ENCODE measurements at regions of chr18 and their contacts with region 1.

Region 1: GRCh38 chr18:48868468-48869466 is 82.0 kb downstream of the SMAD7 start:
- DNase-seq: peak; percentile 96
- ATAC-seq: peak; percentile 92
- H3K4me3 ChIP-seq: 0 out of 2 replicates have a peak overlapping the region, but pooled peaks have one; percentile 20
- H3K27ac ChIP-seq: peak overlapping the region; percentile 97
- H3K4me1 ChIP-seq: peaks cover 29% of the 10 kb centered on the region
- H3K27me3 ChIP-seq: no peaks in the 10 kb centered on the region
- CTCF ChIP-seq: no peak
- EP300 ChIP-seq: peak; percentile 84 to 93
- POLR2A ChIP-seq: peak; percentile 73
- RAD21 ChIP-seq: peak; percentile 28; the same call in 1 of the 2 replicates

Region 2: DNA sequence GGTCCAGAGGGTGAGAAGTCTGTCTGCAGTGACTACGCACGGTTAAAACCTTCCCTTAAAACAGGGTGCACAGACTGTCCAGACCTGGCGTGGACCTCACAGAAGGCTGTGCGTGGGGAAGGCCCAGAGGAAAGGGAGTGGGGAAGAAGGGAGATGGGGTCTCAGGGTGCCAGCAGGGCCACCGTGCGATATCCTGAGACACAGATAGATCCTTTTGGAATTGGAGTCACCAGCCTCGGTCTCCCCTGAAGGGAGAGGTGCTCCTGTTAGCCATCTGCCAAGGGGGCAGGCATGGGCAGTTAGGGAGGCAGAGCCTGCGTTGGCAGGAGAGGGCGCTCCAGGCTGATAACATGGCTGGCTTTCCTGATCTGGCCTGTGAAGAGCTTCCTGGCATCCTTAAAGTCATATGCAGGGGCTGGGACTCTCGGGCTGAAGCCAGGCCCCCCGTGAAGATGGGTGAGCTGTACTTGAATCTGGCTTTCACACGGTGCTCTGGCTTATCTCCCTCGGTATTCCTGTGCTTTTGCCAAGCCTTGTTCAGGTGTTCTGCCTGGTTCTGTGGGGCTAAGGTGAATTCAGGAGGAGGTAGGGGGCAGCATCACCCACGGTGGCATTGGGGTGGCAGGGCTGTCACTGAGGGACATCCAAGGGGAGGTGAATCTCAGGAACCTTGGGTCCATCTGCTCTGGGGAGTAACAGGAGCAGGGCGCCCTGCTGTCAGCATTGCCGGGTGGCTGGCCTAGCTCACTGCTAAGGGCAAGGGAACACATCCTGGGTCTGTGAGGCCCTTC is 831.1 kb before region 1 on chr18:
- CTCF ChIA-PET with region 1: no interaction called
- POLR2A ChIA-PET with region 1: no interaction called
- RAD21 ChIA-PET with region 1: no interaction called
- SMC1A ChIA-PET with region 1: no interaction called
- in situ Hi-C with region 1: no loop called
- intact Hi-C with region 1: no loop called
- DNase-seq: no peak
- ATAC-seq: peak; percentile 31; the same call in 1 of the 3 replicates
- H3K4me3 ChIP-seq: no peak overlapping the region
- H3K27ac ChIP-seq: no peak overlapping the region
- H3K4me1 ChIP-seq: no peaks in the 10 kb centered on the region
- H3K27me3 ChIP-seq: peaks cover 0 to 3% of the 10 kb centered on the region in 2 experiments; a peak in 3 of 4 replicates
- CTCF ChIP-seq: 0 out of 6 replicates have a peak, but pooled peaks of 1 of the 3 experiments have one; percentile 4
- EP300 ChIP-seq: no peak
- POLR2A ChIP-seq: no peak
- RAD21 ChIP-seq: 0 out of 2 replicates have a peak, but pooled peaks have one; percentile 12

Region 3: DNA sequence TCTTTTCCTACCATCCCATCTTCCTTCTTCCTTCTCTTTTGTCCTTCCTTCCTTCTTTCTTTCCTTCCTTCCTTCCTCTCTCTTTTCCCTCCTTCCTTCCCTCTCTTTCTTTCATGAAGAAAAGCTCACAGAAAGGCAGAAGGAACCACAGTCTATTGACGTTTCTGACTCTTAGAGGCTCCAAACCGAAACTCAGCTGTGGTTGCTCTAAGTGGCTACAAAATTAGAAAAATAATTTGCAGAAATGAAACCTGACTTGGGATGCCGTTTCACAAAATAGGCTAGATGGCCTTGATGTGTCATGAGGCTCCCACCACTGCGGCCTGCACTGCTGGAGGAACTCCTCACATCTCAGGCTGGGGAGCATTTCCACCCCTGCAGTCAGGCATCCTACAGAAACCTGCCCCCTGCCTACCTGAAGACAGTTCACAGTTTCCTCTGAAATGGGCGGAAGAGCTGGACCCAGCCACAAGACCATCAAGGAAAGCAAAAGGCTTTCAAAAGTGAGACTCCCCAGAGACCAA is 83.6 kb before region 1 on chr18:
- CTCF ChIA-PET with region 1: interaction called, 8 read pairs
- POLR2A ChIA-PET with region 1: no interaction called
- RAD21 ChIA-PET with region 1: interaction called, 36 read pairs
- SMC1A ChIA-PET with region 1: interaction called, 30 read pairs
- in situ Hi-C with region 1: no loop called
- intact Hi-C with region 1: loop called (anchors 2 kb)
- DNase-seq: peak; percentile 94
- ATAC-seq: peak; percentile 94
- H3K4me3 ChIP-seq: peak overlapping the region; percentile 54; the same call in 1 of the 2 replicates
- H3K27ac ChIP-seq: peak overlapping the region; percentile 91
- H3K4me1 ChIP-seq: peaks cover 47% of the 10 kb centered on the region
- H3K27me3 ChIP-seq: no peaks in the 10 kb centered on the region
- CTCF ChIP-seq: no peak
- EP300 ChIP-seq: peak; percentile 85 to 87; a peak in 2 of 4 replicates
- POLR2A ChIP-seq: 0 out of 2 replicates have a peak, but pooled peaks have one; percentile 27
- RAD21 ChIP-seq: peak; percentile 23; the same call in 1 of the 2 replicates

Region 4: DNA sequence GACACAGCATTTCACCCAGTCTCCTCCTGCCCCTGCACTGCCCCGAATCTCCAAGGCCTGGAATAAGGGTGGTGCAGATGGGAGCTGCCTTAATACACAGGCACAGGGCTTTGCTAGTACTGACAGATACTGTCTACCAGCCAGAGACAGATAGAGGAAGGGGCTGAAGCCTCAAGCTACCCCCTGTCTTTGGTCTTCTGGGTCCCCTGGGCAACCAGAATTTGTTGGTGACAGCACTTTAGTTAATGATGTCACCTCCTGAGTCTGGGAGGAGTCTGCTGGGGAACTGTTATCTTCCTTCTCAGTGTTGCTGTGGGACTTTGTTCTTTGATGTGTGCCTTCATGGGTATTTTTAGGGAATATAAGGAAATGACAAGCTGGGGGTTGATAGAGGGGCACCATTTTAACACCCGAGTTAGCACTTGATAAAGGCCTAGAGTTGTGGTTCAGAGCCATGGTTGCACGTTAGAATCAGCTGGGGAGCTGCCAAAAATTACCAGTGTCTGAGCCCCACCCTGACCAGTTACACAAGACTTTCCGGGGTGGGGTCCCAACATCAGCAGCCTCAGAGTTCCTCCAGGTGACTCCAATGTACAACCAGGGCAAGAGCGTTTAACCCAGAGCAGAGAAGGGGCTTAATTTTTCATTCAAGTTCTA is 54.8 kb before region 1 on chr18:
- CTCF ChIA-PET with region 1: interaction called, 6 read pairs
- POLR2A ChIA-PET with region 1: interaction called, 3 read pairs
- RAD21 ChIA-PET with region 1: interaction called, 30 read pairs
- SMC1A ChIA-PET with region 1: interaction called, 15 read pairs
- in situ Hi-C with region 1: no loop called
- intact Hi-C with region 1: no loop called
- DNase-seq: no peak
- ATAC-seq: peak; percentile 70
- H3K4me3 ChIP-seq: no peak overlapping the region
- H3K27ac ChIP-seq: peak overlapping the region; percentile 81
- H3K4me1 ChIP-seq: peaks cover 33% of the 10 kb centered on the region
- H3K27me3 ChIP-seq: no peaks in the 10 kb centered on the region
- CTCF ChIP-seq: no peak
- EP300 ChIP-seq: no peak
- POLR2A ChIP-seq: no peak
- RAD21 ChIP-seq: no peak

Region 5: DNA sequence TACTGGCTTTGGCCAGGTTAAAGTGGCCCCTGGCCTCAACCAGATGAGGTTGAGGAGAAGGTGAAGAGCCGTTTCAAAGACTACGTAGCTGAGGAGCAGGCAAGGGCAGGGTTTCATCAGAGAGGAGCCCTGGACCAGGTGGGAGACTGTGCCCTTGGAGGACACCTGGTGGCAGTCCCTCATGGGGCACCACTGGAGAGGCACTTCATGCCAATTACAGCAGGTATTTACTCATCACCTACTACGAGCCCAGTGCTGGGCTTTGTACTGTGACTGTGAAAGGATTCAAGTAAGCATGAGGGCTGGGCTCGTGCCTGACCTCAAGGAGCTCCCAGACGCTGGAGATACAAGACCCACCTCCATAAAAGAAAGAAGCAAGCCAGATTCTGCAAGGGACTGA is 44.4 kb after region 1 on chr18:
- CTCF ChIA-PET with region 1: interaction called, 9 read pairs
- POLR2A ChIA-PET with region 1: no interaction called
- RAD21 ChIA-PET with region 1: interaction called, 4 read pairs
- SMC1A ChIA-PET with region 1: interaction called, 9 read pairs
- in situ Hi-C with region 1: no loop called
- intact Hi-C with region 1: loop called (anchors 5 kb)
- DNase-seq: no peak
- ATAC-seq: peak; percentile 79
- H3K4me3 ChIP-seq: no peak overlapping the region
- H3K27ac ChIP-seq: no peak overlapping the region
- H3K4me1 ChIP-seq: peaks cover 10% of the 10 kb centered on the region
- H3K27me3 ChIP-seq: no peaks in the 10 kb centered on the region
- CTCF ChIP-seq: peak; percentile 38 to 51 (median 43); a peak in 5 of 6 replicates
- EP300 ChIP-seq: no peak
- POLR2A ChIP-seq: no peak
- RAD21 ChIP-seq: peak; percentile 34; the same call in 1 of the 2 replicates

Region 6: GRCh38 chr18:48946329-48946835 is 77.6 kb after region 1 on chr18:
- CTCF ChIA-PET with region 1: interaction called, 3 read pairs
- POLR2A ChIA-PET with region 1: interaction called, 4 read pairs
- RAD21 ChIA-PET with region 1: interaction called, 17 read pairs
- SMC1A ChIA-PET with region 1: interaction called, 16 read pairs
- in situ Hi-C with region 1: no loop called
- intact Hi-C with region 1: no loop called
- DNase-seq: no peak
- ATAC-seq: no peak
- H3K4me3 ChIP-seq: peak overlapping the region; percentile 92
- H3K27ac ChIP-seq: peak overlapping the region; percentile 42; the same call in 1 of the 2 replicates
- H3K4me1 ChIP-seq: peaks cover 19% of the 10 kb centered on the region
- H3K27me3 ChIP-seq: no peaks in the 10 kb centered on the region
- CTCF ChIP-seq: no peak
- EP300 ChIP-seq: no peak
- POLR2A ChIP-seq: no peak
- RAD21 ChIP-seq: no peak

Region 7: GRCh38 chr18:48992699-48993555 is 124.2 kb after region 1 on chr18:
- CTCF ChIA-PET with region 1: no interaction called
- POLR2A ChIA-PET with region 1: no interaction called
- RAD21 ChIA-PET with region 1: no interaction called
- SMC1A ChIA-PET with region 1: no interaction called
- in situ Hi-C with region 1: no loop called
- intact Hi-C with region 1: no loop called
- DNase-seq: peak; percentile 13
- ATAC-seq: peak; percentile 83
- H3K4me3 ChIP-seq: no peak overlapping the region
- H3K27ac ChIP-seq: no peak overlapping the region
- H3K4me1 ChIP-seq: no peaks in the 10 kb centered on the region; the same call in 1 of the 2 replicates
- H3K27me3 ChIP-seq: no peaks in the 10 kb centered on the region; a peak in 1 of 4 replicates
- CTCF ChIP-seq: no peak
- EP300 ChIP-seq: no peak
- POLR2A ChIP-seq: no peak
- RAD21 ChIP-seq: no peak

Region 8: GRCh38 chr18:49094979-49095632 is 226.3 kb after region 1 on chr18:
- CTCF ChIA-PET with region 1: no interaction called
- POLR2A ChIA-PET with region 1: no interaction called
- RAD21 ChIA-PET with region 1: no interaction called
- SMC1A ChIA-PET with region 1: no interaction called
- in situ Hi-C with region 1: no loop called
- intact Hi-C with region 1: no loop called
- DNase-seq: no peak
- ATAC-seq: no peak
- H3K4me3 ChIP-seq: no peak overlapping the region
- H3K27ac ChIP-seq: no peak overlapping the region
- H3K4me1 ChIP-seq: no peaks in the 10 kb centered on the region
- H3K27me3 ChIP-seq: no peaks in the 10 kb centered on the region
- CTCF ChIP-seq: no peak
- EP300 ChIP-seq: no peak
- POLR2A ChIP-seq: no peak
- RAD21 ChIP-seq: no peak

Region 9: GRCh38 chr18:49371786-49372185 is 503.0 kb after region 1 on chr18:
- CTCF ChIA-PET with region 1: no interaction called
- POLR2A ChIA-PET with region 1: no interaction called
- RAD21 ChIA-PET with region 1: no interaction called
- SMC1A ChIA-PET with region 1: no interaction called
- in situ Hi-C with region 1: no loop called
- intact Hi-C with region 1: no loop called
- DNase-seq: no peak
- ATAC-seq: no peak
- H3K4me3 ChIP-seq: no peak overlapping the region
- H3K27ac ChIP-seq: no peak overlapping the region
- H3K4me1 ChIP-seq: no peaks in the 10 kb centered on the region
- H3K27me3 ChIP-seq: no peaks in the 10 kb centered on the region
- CTCF ChIP-seq: no peak
- EP300 ChIP-seq: no peak
- POLR2A ChIP-seq: no peak
- RAD21 ChIP-seq: no peak